Mammary epithelial cell (primary cell): ENCODE measurements at regions of chr2 and their contacts with region 1.

Region 1: DNA sequence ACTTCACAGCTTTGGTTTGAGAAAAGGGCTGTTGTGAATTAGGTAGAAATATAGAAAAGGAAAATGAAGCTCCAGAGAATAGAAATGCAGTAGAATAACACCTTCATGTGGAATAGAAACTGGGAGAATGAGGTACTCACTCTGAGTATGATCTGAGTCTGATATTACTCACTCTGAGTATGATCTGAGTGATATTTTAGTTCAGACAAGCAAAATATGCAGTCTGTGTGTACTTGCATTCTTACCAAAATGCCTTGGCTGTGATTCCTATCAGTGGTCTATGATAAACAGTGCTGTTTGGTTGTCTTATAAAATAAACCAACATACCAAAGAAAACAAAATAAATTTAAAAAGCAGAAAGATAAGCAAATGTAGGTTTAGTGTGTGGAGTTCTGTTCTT is 487.6 kb downstream of the THSD7B start:
- DNase-seq: peak; percentile 81
- H3K4me3 ChIP-seq: no peak overlapping the region
- H3K27ac ChIP-seq: peak overlapping the region; percentile 74
- H3K4me1 ChIP-seq: peaks cover 46% of the 10 kb centered on the region
- H3K27me3 ChIP-seq: no peaks in the 10 kb centered on the region
- CTCF ChIP-seq: no peak

Region 2: DNA sequence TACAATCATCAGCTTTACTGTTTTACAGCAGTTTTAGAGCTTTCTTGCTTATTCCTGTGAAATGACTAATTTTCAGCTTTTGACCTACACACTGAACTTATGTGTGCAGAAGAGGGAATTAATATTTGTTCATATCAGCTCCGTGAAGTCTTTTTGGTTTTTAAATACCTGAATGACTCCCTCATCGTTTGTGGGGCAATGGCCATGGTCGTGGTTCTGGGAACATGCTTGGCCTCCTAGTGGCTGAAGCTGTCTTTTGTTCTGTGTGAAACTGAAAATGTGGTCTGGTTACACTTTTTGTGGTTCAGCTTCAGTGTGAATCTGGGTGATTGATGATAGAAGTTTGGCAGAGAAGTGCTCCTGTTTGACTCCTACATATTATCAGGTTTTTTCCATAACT is 79.5 kb before region 1 on chr2:
- CTCF ChIA-PET with region 1: no interaction called
- dilution Hi-C with region 1: loop called (anchors 5 kb)
- in situ Hi-C with region 1: no loop called
- intact Hi-C with region 1: loop called (anchors 5 kb)
- DNase-seq: peak; percentile 81
- H3K4me3 ChIP-seq: no peak overlapping the region
- H3K27ac ChIP-seq: no peak overlapping the region
- H3K4me1 ChIP-seq: peaks cover 18% of the 10 kb centered on the region
- H3K27me3 ChIP-seq: no peaks in the 10 kb centered on the region
- CTCF ChIP-seq: peak; percentile 65 to 67

Region 3: DNA sequence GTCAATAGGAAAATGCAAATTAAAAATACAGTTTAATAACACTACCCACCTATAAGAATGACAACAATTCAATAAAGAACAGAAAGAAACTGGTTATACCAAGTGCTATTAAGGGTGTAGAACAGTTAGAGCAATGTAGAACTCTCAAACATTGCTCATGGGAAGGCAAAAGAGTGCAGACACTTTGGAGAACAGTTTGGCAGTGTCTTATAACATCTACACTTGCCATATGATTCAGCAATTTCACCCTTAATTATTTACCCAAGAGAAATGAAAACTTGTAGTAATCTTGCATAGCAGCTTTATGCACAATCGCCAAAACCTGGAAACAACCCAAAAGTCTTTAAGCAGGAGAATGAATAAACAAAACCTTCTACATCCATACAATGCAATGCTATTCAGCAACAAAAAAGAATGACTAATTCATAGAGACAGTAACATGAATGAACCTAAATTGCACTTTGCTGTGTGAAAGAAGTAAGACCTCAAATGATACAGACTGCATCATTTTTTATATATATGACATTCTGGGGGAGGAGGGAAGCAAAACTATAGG is 32.4 kb before region 1 on chr2:
- CTCF ChIA-PET with region 1: no interaction called
- dilution Hi-C with region 1: loop called (anchors 5 kb)
- in situ Hi-C with region 1: no loop called
- intact Hi-C with region 1: no loop called
- DNase-seq: peak; percentile 90
- H3K4me3 ChIP-seq: no peak overlapping the region
- H3K27ac ChIP-seq: no peak overlapping the region
- H3K4me1 ChIP-seq: no peaks in the 10 kb centered on the region
- H3K27me3 ChIP-seq: no peaks in the 10 kb centered on the region
- CTCF ChIP-seq: no peak

Region 4: DNA sequence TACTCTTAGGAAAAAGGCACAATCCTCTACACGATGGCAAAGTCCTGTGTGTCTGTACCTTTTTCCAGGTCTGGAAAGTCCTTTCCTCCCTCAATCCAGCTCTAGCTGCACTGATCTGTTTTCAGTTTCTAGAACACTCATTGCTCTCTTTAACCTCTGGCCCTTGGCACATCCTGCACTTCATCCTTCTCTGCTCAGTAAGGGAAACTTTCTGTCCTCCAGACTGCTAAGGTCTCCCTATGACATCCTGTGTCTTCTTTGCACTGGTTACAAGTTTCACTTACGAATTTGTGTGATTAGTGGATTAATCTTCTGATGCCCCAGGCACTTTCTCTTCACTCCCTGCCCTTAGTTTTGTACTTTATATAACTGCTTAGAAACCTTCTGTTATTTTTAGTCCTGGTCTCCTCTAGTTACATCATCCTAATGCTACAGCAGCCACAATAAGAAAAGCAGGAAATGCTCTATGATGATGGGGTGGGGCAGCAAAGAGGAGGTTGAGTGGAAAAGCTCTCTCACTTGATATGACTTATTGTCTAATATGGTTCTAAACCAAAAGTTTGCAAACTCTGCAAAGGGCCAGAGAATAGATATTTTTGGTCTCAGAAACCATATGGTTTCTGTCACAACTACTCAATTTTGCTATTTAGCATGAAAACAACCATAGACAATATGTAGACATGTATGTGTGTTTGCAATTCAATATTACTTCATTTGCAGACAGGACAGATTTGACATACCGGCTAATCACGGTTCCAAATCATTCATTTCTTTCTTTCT is 80.6 kb after region 1 on chr2:
- CTCF ChIA-PET with region 1: no interaction called
- dilution Hi-C with region 1: no loop called
- in situ Hi-C with region 1: no loop called
- intact Hi-C with region 1: loop called (anchors 2 kb)
- DNase-seq: peak; percentile 62
- H3K4me3 ChIP-seq: no peak overlapping the region
- H3K27ac ChIP-seq: no peak overlapping the region
- H3K4me1 ChIP-seq: peaks cover 4% of the 10 kb centered on the region
- H3K27me3 ChIP-seq: no peaks in the 10 kb centered on the region
- CTCF ChIP-seq: no peak